Activated CD4-positive, alpha-beta T cell treated with anti-CD3 and anti-CD28 coated beads for 36 hours (primary cell): ENCODE measurements at regions of chr16 and their contacts with region 1.

Region 1: DNA sequence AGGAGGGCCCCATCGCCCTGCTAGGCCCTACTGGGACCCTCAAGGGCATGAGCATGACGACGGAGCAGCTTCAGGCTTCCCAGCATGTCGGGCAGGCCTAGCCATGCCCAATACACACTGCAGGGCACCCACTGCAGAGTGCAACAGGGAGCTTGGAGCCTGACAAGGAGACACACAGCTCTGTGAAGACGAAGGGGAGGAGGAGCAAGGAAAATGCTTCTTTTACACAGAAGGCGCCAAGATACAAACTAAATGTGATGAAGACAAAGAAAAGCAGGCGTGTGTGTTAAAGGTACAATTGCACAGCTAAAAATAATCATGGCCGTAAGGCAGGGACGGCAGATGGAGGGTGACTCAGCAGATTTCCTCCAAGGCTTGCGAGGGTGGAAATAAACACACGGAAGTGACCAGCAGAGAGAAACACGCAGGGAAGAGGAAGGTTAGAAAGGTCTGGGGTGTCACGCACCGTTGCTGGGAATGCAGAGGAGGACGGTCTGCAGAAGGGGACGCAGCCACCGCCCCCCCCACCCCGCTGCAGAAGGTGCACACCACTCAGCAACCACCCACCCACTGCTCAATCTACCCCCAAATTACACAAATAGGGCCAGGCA is 108.5 kb downstream of the ZNF778 start:
- DNase-seq: no peak
- ATAC-seq: no peak
- H3K4me3 Mint-ChIP-seq: no peak overlapping the region
- H3K27ac Mint-ChIP-seq: peak overlapping the region; percentile 77
- H3K4me1 Mint-ChIP-seq: peaks cover 87% of the 10 kb centered on the region
- H3K27me3 Mint-ChIP-seq: no peaks in the 10 kb centered on the region

Region 2: GRCh38 chr16:89093602-89094251 is 232.2 kb before region 1 on chr16 and contains the start of gene ACSF3:
- CTCF ChIA-PET with region 1: no interaction called
- POLR2A ChIA-PET with region 1: no interaction called
- intact Hi-C with region 1: no loop called
- DNase-seq: peak; percentile 78
- ATAC-seq: peak; percentile 35
- H3K4me3 Mint-ChIP-seq: peak within 1 kb of the TSS; percentile 98
- H3K27ac Mint-ChIP-seq: peak within 1 kb of the TSS; percentile 95
- H3K4me1 Mint-ChIP-seq: peaks cover 45% of the 10 kb centered on the region
- H3K27me3 Mint-ChIP-seq: no peaks in the 10 kb centered on the region
- total RNA-seq, gene ACSF3: 39.7 to 41.7 TPM

Region 3: GRCh38 chr16:89350701-89351380 is 24.9 kb after region 1 on chr16:
- CTCF ChIA-PET with region 1: interaction called, 4 read pairs
- POLR2A ChIA-PET with region 1: interaction called, 3 read pairs
- intact Hi-C with region 1: loop called (anchors 1 kb)
- DNase-seq: peak; percentile 78
- ATAC-seq: peak; percentile 81
- H3K4me3 Mint-ChIP-seq: no peak overlapping the region
- H3K27ac Mint-ChIP-seq: peak overlapping the region; percentile 74
- H3K4me1 Mint-ChIP-seq: peaks cover 94% of the 10 kb centered on the region
- H3K27me3 Mint-ChIP-seq: no peaks in the 10 kb centered on the region